Activated T-helper 1 cell treated with anti-CD3 and anti-CD28 coated beads, Interleukin-12 subunit alpha, Interleukin-12 subunit beta, Interleukin-2, Interleukin-4 antibody, amounts not matched to agents 30 ng/mL and 10 ng/mL and 1 ng/mL, durations not matched to agents 14 hours and 24 hours and 36 hours (primary cell): ENCODE measurements at regions of chr11 and their contacts with region 1.

Region 1: GRCh38 chr11:20647976-20648565 is 21.3 kb upstream of the NELL1 start:
- DNase-seq: peak; percentile 6
- H3K4me3 Mint-ChIP-seq: no peak overlapping the region
- H3K27ac Mint-ChIP-seq: no peak overlapping the region
- H3K4me1 Mint-ChIP-seq: no peaks in the 10 kb centered on the region
- H3K27me3 Mint-ChIP-seq: peaks cover 2% of the 10 kb centered on the region

Region 2: GRCh38 chr11:20596205-20597153 is 51.6 kb before region 1 on chr11:
- intact Hi-C with region 1: no loop called
- DNase-seq: no peak
- H3K4me3 Mint-ChIP-seq: no peak overlapping the region
- H3K27ac Mint-ChIP-seq: no peak overlapping the region
- H3K4me1 Mint-ChIP-seq: no peaks in the 10 kb centered on the region
- H3K27me3 Mint-ChIP-seq: peaks cover 57% of the 10 kb centered on the region

Region 3: DNA sequence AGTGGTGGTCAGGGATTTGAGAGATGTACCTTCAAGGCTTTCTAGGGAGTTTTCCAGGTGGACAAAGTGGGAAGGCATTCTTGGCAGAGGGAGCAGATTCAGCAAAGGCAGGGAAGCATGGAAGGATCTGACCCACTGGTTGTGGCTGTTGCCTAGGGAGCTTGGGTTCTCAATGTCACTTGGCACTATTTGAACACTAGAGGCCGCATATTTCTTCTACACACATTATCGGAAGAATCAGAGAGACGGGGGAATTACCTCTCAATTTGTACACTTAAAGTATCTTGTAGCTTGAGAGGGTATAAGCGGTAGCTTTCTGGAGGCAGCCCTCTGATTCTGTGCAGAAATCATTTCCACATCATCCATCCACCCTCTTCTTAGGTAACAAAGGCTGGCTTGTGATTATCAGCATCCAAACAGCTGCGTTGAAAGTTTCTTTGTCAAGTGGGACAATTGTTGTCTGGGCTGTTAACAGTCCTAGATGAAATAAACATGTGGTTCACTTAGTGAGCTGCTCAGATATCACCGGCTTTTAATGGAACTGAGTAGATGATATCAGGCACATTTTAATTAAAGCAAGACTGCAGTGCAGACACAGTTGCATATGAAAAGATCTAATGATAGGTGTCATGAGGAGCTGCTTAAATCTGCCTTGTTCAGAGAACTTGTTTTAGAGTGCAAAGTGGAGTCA is 23.9 kb after region 1 on chr11:
- intact Hi-C with region 1: loop called (anchors 2 kb)
- DNase-seq: no peak
- H3K4me3 Mint-ChIP-seq: no peak overlapping the region
- H3K27ac Mint-ChIP-seq: no peak overlapping the region
- H3K4me1 Mint-ChIP-seq: no peaks in the 10 kb centered on the region
- H3K27me3 Mint-ChIP-seq: peaks cover 53% of the 10 kb centered on the region

Region 4: GRCh38 chr11:20739107-20739506 is 91.0 kb after region 1 on chr11:
- intact Hi-C with region 1: no loop called
- DNase-seq: no peak
- H3K4me3 Mint-ChIP-seq: no peak overlapping the region
- H3K27ac Mint-ChIP-seq: no peak overlapping the region
- H3K4me1 Mint-ChIP-seq: no peaks in the 10 kb centered on the region
- H3K27me3 Mint-ChIP-seq: no peaks in the 10 kb centered on the region

Region 5: DNA sequence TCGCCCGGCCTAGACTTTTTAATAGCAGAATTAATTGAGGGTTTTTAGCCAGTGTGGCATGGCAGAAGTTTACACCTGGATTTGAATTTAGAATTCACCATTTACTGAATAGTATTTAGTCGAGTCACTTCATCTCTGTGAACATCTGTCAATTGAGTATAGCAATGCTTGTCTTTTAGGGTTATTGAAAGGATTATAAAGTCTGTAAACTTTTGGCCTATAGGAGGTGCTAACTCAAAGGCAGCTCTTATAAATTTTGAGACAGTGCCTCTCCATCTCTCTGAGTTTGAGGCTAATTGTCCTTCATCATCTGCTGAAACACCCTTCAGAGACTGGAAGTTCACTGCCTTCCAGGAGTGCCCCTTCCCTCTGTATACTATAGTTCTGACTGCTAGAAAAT is 226.3 kb after region 1 on chr11:
- intact Hi-C with region 1: loop called (anchors 2 kb)
- DNase-seq: no peak
- H3K4me3 Mint-ChIP-seq: no peak overlapping the region
- H3K27ac Mint-ChIP-seq: no peak overlapping the region
- H3K4me1 Mint-ChIP-seq: no peaks in the 10 kb centered on the region
- H3K27me3 Mint-ChIP-seq: no peaks in the 10 kb centered on the region